MCF 10A (cell line): ENCODE measurements at regions of chr10 and their contacts with region 1.

Region 1: GRCh38 chr10:31928549-31929260 is at the start of gene ARHGAP12:
- DNase-seq: peak; percentile 83
- H3K4me3 Mint-ChIP-seq: peak within 1 kb of the TSS; percentile 89
- H3K27ac Mint-ChIP-seq: peak within 1 kb of the TSS; percentile 97
- H3K4me1 Mint-ChIP-seq: peaks cover 32% of the 10 kb centered on the region
- H3K27me3 Mint-ChIP-seq: no peaks in the 10 kb centered on the region
- CTCF ChIP-seq: no peak
- total RNA-seq, gene ARHGAP12: 25.8 and 26.0 TPM in 2 replicates

Region 2: DNA sequence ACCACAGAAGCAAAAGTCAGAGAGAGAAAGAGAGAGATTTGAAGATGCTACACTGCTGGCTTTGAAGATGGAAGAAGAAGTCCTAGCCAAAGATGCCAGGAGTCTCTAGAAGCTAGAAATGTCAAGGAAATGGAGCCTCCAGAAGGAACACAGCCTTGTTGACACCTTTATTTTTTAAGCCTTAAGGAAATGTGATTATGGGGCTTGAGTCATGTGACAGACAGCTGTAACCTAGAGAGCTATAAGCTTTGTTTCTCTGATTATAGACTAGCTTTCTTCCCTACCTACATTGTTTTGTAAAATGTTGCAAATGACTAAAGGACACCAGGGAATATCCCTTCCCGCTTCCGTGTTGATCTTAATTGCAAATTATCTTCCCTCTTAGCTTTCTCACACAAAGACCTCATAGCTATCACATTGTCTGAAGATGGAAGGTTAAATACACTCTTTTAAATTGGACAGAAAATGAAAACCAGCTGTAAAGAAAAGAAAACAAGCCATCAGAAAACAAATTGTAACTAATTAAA is 199.9 kb before region 1 on chr10:
- CTCF ChIA-PET with region 1: no interaction called
- POLR2A ChIA-PET with region 1: no interaction called
- intact Hi-C with region 1: no loop called
- DNase-seq: no peak
- H3K4me3 Mint-ChIP-seq: no peak overlapping the region
- H3K27ac Mint-ChIP-seq: no peak overlapping the region
- H3K4me1 Mint-ChIP-seq: no peaks in the 10 kb centered on the region
- H3K27me3 Mint-ChIP-seq: no peaks in the 10 kb centered on the region
- CTCF ChIP-seq: no peak

Region 3: DNA sequence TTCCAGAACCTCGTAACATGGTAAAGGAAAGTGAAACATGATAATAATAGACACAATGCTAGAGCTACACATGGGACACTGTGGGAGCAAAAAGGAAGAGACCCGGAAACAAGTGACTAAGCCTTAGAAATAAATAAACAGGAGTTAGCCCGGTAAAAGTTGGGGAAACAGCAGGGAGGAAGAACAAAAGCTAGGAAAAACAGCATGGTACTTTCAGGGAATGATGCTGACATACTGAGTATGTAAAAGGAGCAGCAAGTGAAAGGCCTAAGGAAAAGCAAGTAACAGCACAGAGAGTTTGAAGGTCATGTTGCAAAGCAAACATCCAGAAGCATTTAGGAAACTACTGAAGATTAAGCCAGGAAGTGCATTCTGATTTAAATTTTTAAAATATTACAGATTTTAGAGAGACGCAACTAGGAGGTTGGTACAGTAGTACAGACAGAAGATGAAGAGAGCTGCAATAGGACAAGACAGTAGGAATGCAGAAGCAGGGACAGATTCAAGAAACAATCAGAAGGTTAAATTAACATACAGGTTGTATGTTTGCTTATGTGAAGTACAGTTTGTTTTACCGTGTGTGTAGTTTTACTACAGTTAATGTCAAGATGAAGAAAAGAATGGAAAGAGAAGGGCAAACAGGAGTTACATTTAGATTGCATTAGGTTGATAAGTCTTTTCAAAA is 63.7 kb before region 1 on chr10:
- CTCF ChIA-PET with region 1: interaction called, 14 read pairs
- POLR2A ChIA-PET with region 1: interaction called, 38 read pairs
- intact Hi-C with region 1: loop called (anchors 2 kb)
- DNase-seq: peak; percentile 42
- H3K4me3 Mint-ChIP-seq: peak overlapping the region; percentile 40
- H3K27ac Mint-ChIP-seq: peak overlapping the region; percentile 77
- H3K4me1 Mint-ChIP-seq: peaks cover 38% of the 10 kb centered on the region
- H3K27me3 Mint-ChIP-seq: no peaks in the 10 kb centered on the region
- CTCF ChIP-seq: no peak

Region 4: DNA sequence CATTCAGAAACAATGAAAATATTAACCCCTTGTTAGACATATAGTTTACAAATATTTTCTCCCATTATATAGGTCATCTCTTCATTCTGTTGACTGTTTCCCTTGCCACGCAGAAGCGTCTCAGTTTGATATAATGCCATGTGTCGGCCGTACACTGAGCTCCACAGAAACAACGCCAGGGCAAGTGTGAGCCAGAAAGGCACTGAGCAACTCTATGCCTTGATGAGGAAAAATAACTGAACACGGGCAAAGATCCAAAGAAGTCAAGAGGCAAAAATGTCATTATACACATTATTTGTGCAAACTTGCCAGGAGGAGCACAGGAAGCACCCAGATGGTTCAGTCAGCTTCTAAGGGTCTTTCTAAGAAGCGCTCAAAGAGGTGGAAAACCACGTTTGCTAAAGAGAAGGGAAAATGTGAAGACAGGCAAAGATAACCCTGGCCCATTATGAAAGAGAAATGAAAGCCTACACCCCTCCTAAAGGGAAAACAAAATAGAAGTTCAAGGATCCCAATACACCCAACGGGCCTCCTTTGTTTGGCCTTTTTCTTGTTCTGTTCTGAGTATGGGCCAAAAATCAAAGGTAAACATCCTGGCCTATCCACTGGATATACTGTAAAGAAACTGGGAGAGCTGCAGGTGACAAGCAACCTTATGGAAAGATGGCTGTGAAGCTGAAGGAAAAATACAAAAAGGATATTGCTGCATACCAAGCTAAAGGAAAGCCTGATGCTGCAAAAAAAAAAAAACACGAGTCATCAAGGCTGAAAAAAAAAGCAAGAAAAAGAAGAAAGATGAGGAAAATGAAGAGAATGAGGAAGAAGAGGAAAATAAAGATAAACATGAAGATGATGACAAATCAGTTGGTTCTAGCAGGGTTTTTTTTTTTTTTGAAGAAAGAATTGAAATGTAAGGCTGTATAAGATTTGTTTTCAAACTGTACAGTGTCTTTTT is 15.5 kb before region 1 on chr10:
- CTCF ChIA-PET with region 1: no interaction called
- POLR2A ChIA-PET with region 1: interaction called, 17 read pairs
- intact Hi-C with region 1: no loop called
- DNase-seq: peak; percentile 24
- H3K4me3 Mint-ChIP-seq: peak overlapping the region; percentile 39
- H3K27ac Mint-ChIP-seq: peak overlapping the region; percentile 18
- H3K4me1 Mint-ChIP-seq: peaks cover 40% of the 10 kb centered on the region
- H3K27me3 Mint-ChIP-seq: no peaks in the 10 kb centered on the region
- CTCF ChIP-seq: no peak

Region 5: DNA sequence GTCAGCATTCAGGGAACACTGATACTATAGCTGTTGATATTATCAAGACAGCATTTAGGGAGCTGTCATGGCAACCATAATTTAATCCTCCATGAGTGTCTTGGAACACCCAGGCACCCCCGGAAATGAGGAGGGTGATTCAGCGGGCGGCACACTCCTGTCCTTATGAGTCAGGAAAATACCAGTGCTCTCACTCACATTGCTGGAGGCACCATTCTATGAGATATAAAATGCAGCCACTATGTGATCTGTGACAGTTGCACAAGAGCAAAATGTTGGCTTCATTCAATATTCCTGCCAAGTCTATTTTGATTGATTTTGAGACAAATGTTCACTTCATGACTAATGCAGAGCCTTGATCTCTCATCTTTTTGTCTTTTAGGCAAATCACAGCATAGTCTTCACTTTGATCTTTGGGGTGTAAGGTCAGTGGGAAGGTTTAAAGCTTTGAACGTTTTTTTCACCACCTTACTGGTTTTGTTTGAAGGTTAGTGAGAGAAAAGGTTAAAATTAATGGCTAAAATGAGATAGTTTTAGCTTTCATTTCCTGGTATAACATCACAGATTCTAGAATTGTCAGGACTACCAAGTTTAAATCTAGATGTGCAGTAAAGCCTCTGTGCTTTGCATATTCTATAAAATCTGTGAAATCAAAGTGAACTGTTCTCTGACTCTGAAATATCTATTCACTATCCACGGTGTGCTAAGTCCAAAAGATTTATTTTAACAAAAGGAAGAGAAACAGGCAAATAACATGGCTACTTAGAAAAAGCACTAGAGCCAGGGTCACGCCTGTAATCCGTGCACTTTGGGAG is 12.3 kb after region 1 on chr10:
- CTCF ChIA-PET with region 1: interaction called, 4 read pairs
- POLR2A ChIA-PET with region 1: interaction called, 69 read pairs
- intact Hi-C with region 1: no loop called
- DNase-seq: peak; percentile 98
- H3K4me3 Mint-ChIP-seq: peak overlapping the region; percentile 36
- H3K27ac Mint-ChIP-seq: peak overlapping the region; percentile 87
- H3K4me1 Mint-ChIP-seq: peaks cover 28% of the 10 kb centered on the region
- H3K27me3 Mint-ChIP-seq: no peaks in the 10 kb centered on the region
- CTCF ChIP-seq: no peak

Region 6: GRCh38 chr10:31947144-31947926 is 18.6 kb after region 1 on chr10:
- CTCF ChIA-PET with region 1: interaction called, 4 read pairs
- POLR2A ChIA-PET with region 1: interaction called, 69 read pairs
- intact Hi-C with region 1: no loop called
- DNase-seq: peak; percentile 91
- H3K4me3 Mint-ChIP-seq: peak overlapping the region; percentile 15
- H3K27ac Mint-ChIP-seq: peak overlapping the region; percentile 81
- H3K4me1 Mint-ChIP-seq: peaks cover 19% of the 10 kb centered on the region
- H3K27me3 Mint-ChIP-seq: no peaks in the 10 kb centered on the region
- CTCF ChIP-seq: peak; percentile 59

Region 7: DNA sequence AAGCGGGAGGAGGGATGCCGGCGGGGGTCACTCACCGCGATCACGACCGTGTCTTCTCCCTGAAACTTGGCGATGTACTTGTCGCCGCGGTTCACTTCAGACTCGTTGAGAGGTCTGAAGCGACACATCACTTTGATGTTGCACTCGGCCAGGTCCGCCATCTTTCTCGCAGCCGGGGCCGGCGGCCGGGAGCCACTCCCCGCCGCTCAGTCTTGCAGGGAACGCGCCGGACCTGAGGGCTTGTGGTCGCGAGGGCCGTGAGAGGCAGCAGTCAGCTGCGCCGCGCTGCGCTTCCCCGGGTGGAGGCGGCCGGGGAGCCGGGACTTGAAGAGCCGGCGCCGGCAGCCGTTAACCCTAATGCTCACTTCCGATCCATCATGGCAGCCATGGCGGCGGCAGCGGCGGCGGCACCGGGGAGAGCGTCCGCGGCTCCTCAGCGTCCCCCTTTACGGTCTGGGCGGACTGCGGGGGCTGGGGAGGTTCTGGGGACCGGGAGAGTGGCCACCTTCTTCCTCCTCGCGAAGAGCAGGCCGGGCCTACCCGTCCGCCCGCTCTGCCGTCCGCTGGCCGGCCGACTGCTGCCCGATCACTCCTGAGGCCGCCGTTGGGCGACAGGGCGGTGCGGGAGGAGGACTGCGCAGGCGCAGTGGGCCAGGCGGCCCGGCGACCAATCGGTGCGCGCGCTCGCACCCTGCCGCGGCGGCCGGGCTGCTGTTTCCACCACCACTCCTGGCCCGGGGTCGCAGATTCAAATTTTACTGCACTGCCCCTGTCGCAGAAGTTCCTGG is 127.3 kb after region 1 on chr10 and contains the start of gene KIF5B:
- CTCF ChIA-PET with region 1: no interaction called
- POLR2A ChIA-PET with region 1: interaction called, 10 read pairs
- intact Hi-C with region 1: no loop called
- DNase-seq: peak; percentile 83
- H3K4me3 Mint-ChIP-seq: peak within 1 kb of the TSS; percentile 98
- H3K27ac Mint-ChIP-seq: peak within 1 kb of the TSS; percentile 90
- H3K4me1 Mint-ChIP-seq: no peaks in the 10 kb centered on the region
- H3K27me3 Mint-ChIP-seq: no peaks in the 10 kb centered on the region
- CTCF ChIP-seq: no peak
- total RNA-seq, gene KIF5B: 150 and 187 TPM in 2 replicates

Region 8: DNA sequence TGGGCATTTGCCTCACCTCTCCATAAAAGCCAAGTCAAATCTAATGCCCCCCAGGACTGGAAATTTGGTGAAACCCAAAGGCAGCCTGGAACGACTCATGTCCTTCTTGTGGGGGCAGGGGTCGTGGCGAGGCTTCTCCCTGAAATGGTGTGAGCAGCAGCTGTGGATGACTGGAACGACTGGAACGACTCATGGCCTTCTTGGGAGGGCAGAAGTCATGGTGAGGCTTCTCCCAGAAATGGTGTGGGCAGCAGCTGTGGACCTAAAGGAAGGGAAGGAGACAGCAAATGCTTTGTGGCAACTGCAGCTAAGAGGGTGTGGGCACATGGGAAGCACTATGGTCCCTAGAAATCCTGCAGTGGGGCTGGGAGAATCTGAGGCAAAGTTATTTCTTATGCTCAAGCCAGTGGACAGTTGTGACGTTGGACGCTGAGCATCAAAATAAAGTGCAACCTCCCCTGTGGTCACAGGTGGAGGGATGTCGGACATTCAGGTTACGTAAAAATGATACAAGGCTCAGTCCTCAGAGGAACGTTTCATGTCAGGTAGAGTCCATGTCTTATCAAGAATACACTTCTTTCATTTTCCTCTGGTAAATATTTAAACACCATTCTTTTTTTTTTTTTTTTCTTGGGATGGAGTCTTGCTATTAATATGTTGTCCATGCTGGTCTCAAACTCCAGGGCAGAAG is 234.5 kb after region 1 on chr10:
- CTCF ChIA-PET with region 1: no interaction called
- POLR2A ChIA-PET with region 1: no interaction called
- intact Hi-C with region 1: no loop called
- DNase-seq: no peak
- H3K4me3 Mint-ChIP-seq: no peak overlapping the region
- H3K27ac Mint-ChIP-seq: no peak overlapping the region
- H3K4me1 Mint-ChIP-seq: no peaks in the 10 kb centered on the region
- H3K27me3 Mint-ChIP-seq: no peaks in the 10 kb centered on the region
- CTCF ChIP-seq: no peak